Posterior vena cava (tissue), 2 donors: ENCODE measurements at regions of chr5 and their contacts with region 1.

Region 1: DNA sequence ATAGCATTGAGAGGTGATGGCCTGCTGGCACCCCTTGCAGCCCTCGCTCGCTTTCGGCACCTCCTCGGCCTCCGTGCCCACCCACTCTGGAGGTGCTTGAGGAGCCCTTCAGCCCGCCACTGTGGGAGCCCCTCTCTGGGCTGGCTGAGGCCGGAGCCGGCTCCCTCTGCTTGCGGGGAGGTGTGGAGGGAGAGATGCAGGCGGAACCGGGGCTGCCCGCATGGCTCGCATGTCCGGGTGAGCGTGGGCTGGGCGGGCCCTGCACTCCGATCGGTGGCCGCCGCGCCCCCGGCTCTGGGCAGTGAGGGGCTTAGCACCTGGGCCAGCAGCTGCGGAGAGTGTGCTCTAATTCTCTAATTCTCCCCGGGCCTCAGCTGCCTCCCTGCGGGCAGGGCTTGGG is 101.1 kb downstream of the KIF4B start:
- DNase-seq: no peak

Region 2: GRCh38 chr5:153613144-153613543 is 1501.5 kb before region 1 on chr5:
- intact Hi-C with region 1: loop called in 1 of 2 experiments (anchors 5 kb)
- DNase-seq: no peak

Region 3: DNA sequence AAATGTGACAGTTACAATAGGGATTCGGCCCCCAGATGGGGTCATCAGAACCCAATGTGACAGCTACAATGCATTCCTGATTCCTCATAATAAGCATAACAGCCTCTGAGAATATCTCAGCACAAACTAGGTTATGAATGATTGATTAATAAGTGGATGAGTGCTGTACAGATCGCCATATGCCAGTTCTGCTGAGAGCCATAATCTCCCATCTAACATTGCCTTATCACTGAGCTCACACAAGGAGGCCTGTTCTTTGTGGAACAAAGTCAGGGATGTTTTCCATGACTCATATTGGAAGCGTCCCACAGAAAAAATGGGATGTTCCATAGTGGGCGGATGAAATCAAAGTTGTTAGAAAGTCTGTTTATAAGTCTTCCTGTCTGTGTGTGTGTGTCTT is 11.5 kb before region 1 on chr5:
- intact Hi-C with region 1: loop called in 1 of 2 experiments (anchors 1 kb)
- DNase-seq: no peak

Region 4: DNA sequence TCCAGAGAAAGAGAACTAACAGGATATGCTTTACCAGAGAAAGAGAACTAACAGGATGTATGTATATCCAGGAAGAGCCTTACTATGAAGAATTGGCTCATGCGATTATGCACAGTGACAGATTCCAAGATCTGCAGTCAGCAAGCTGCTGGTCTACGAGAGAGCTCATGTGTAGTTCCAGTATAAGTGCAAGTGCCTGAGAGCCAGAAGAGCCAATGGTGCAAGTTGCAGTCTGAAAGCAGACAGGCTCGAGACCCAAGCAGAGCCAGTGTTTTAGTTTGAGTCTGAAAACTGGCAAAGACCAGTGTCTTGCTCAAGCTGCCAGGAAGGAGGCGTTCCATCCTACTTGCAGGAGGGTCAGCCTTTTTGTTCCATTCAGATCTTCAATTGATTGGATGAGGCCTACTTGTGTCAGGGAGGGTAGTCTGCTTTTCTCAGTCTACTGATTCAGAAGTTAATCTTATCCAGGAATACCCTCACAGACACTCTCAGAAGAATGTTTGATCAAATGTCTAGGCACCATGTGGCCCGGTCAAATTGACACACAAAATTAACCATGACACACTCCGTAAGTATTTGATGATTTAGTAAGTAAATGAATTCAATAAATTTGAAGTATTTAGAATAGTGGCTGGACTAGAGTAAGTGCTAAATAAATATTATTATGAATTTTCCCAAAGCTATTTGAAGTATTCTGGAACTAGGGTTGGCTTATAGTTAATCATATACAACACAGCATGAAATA is 840.2 kb after region 1 on chr5:
- intact Hi-C with region 1: no loop called
- DNase-seq: no peak